Activated CD4-positive, alpha-beta T cell treated with anti-CD3 and anti-CD28 coated beads for 36 hours (primary cell): ENCODE measurements at regions of chr12 and their contacts with region 1.

Region 1: DNA sequence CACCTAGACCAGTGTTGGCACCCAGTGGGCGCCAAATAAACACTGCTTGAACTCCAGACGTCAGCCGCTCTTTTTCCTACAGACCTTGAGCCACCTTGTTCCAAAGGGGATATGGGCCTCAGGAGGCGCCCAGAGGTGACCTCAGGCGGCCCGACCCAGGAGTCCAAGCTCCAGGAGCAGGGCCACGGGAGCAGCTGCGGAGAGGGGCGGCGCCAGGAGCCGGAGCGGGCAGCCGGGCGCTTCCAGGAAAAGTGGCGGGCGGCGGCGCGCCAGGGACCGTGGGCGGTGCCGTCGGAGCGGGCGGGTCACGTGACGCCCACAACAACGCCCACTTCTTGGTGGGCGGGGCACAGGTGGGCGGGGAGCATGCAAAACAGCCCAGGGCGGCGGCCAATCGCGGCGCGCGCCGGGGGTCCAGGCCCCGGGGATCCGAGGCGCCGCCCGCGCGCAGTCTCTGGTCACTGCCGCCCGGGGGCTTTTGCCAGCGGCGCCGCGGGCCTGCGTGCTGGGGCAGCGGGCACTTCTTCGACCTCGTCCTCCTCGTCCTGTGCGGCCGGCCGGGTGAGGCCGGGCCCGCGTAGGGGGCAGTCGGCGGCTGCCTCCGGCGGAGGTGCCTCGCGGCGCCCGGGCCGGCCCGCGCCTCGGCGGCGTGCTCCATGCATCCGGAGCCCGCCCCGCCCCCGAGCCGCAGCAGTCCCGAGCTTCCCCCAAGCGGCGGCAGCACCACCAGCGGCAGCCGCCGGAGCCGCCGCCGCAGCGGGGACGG is at the start of gene ORAI1:
- DNase-seq: peak; percentile 98
- ATAC-seq: peak; percentile 50
- H3K4me3 Mint-ChIP-seq: peak within 1 kb of the TSS; percentile 92
- H3K27ac Mint-ChIP-seq: peak within 1 kb of the TSS; percentile 99
- H3K4me1 Mint-ChIP-seq: peaks cover 36% of the 10 kb centered on the region
- H3K27me3 Mint-ChIP-seq: no peaks in the 10 kb centered on the region
- total RNA-seq, gene ORAI1: 29.4 to 35.9 TPM

Region 2: DNA sequence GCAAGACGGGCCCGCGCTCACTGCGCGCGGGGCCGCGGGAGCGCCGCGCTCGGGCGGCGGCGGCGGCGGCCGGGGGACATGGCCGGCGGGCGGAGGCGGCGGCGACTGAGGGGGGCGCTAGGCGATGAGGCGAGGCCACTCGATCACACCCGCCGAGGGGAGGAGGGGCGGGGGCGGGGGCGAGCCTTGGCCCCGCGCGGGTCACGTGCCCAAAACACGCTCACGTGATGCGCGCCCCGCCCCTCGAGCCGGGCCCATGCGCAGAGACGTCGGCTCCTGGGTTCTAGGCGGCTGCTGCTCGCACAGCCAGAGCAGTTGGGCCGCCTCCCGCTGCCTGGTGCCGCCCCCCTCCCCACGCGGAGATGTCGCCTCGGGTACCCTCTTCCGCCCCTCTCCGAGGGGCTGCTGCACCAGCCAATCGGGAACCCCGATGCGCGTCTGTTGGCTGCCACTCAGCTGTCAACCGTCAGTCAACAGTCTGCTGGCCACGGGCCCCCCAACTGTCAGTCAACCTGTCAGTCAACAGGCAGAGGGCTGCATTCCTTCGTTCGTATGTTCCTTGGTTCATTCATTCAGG is 722.0 kb before region 1 on chr12 and contains the start of gene SPPL3:
- CTCF ChIA-PET with region 1: no interaction called
- POLR2A ChIA-PET with region 1: no interaction called
- intact Hi-C with region 1: loop called in 1 of 2 experiments (anchors 1 kb)
- DNase-seq: peak; percentile 96
- ATAC-seq: peak; percentile 81
- H3K4me3 Mint-ChIP-seq: peak within 1 kb of the TSS; percentile 92
- H3K27ac Mint-ChIP-seq: peak within 1 kb of the TSS; percentile 95
- H3K4me1 Mint-ChIP-seq: peaks cover 28% of the 10 kb centered on the region
- H3K27me3 Mint-ChIP-seq: no peaks in the 10 kb centered on the region
- total RNA-seq, gene SPPL3: 29.5 to 48.2 TPM

Region 3: DNA sequence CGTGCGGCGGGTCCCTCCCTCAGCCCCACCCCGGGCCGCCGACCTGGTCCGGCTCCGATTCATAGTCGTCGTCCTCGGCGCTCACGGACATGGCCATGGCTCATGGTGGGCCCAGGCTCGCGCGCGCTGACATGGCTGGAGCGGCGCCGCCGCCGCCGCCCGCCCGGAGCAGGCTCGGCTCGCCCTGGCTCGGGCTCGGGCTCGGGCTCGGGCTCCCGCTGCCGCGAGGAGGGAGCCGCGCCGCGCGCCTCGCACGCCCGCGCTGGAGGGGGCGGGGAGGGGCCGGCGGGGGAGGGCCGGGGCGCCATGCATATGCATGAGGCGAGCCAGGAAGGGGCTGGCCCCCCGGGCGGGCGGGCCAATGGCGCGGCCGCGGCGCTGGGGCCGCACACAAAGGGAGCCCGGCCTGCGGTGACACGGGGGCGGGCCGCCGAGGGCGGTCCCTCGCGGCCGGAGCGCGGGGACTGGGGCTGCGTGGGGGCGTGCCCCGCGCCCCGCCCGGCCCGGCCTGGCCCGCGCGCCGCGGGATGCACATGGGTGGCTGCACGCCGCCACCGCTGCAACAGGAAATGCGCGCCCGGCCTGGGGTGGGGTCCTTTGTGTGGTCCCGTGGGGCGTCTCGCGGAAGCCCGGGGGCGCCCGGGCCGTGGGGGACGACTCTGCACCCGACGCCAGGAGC is 159.0 kb before region 1 on chr12:
- CTCF ChIA-PET with region 1: no interaction called
- POLR2A ChIA-PET with region 1: no interaction called
- intact Hi-C with region 1: loop called in 1 of 2 experiments (anchors 1 kb)
- DNase-seq: peak; percentile 93
- ATAC-seq: peak; percentile 94
- H3K4me3 Mint-ChIP-seq: peak overlapping the region; percentile 57
- H3K27ac Mint-ChIP-seq: no peak overlapping the region
- H3K4me1 Mint-ChIP-seq: peaks cover 20% of the 10 kb centered on the region
- H3K27me3 Mint-ChIP-seq: no peaks in the 10 kb centered on the region

Region 4: DNA sequence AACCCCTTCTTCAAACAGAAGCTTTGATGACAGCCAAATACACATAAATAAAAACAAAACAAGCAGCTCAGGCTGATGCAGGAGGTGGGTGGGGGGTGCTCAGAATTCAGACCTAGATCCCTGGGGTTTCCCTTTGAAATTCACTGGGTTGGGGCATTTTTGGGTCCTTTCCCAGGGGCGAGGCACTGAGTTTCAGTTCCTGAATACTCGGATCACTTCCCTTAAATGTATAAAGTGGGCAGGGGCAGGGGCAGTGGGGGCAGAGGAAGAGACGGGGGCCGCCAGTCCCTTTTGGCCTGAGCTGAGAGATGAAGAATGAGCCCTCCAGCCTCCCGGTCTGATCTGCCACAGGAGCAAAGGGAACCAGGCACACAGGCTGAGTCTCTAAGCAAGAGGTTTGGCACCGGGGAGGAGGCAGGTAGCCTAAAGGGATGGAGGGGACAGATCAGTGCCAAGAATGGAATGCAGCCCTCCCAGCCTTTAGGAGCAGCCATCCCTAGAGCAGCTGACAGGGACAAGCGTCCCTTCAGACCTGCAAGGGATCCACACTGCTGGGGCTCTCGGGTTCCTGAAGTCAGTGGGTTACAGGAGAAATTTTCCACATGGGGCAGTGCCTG is 65.8 kb before region 1 on chr12:
- CTCF ChIA-PET with region 1: interaction called, 7 read pairs
- POLR2A ChIA-PET with region 1: no interaction called
- intact Hi-C with region 1: loop called in 1 of 2 experiments (anchors 1 kb)
- DNase-seq: no peak
- ATAC-seq: no peak
- H3K4me3 Mint-ChIP-seq: no peak overlapping the region
- H3K27ac Mint-ChIP-seq: peak overlapping the region; percentile 31
- H3K4me1 Mint-ChIP-seq: peaks cover 8% of the 10 kb centered on the region
- H3K27me3 Mint-ChIP-seq: no peaks in the 10 kb centered on the region

Region 5: DNA sequence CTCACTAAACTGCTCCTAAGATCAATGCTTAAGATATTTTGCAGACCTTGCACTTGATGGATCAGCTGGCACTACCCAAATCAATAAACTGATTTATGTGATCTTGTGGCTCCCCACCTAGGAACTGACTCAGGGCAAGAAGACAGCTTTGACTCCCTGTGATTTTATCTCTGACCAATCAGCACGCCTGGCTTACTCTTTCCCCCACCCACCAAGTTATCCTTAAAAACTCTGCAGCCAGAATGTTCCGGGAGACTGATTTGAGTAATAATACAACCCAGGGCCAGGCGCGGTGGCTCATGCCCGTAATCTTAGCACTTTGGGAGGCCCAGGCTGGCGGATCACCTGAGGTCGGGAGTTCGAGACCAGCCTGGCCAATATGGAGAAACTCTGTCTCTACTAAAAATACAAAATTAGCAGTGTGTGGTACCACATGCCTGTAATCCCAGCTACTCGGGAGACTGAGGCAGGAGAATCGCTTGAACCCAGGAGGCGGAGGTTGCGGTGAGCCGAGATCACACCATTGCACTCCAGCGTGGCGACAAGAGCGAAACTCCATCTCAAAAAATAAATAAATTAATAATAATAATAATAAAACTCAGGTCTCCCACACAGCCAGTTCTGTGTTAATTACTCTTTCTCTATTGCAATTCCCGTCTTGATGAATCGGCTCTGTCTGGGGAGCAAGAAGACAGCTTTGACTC is 31.2 kb after region 1 on chr12:
- CTCF ChIA-PET with region 1: interaction called, 7 read pairs
- POLR2A ChIA-PET with region 1: interaction called, 10 read pairs
- intact Hi-C with region 1: loop called (anchors 1 kb)
- DNase-seq: peak; percentile 65
- ATAC-seq: peak; percentile 64
- H3K4me3 Mint-ChIP-seq: peak overlapping the region; percentile 1
- H3K27ac Mint-ChIP-seq: peak overlapping the region; percentile 99
- H3K4me1 Mint-ChIP-seq: peaks cover 65% of the 10 kb centered on the region
- H3K27me3 Mint-ChIP-seq: no peaks in the 10 kb centered on the region

Region 6: GRCh38 chr12:121712461-121713256 is 86.4 kb after region 1 on chr12 and contains the start of gene TMEM120B:
- CTCF ChIA-PET with region 1: no interaction called
- POLR2A ChIA-PET with region 1: interaction called, 4 read pairs
- intact Hi-C with region 1: loop called in 1 of 2 experiments (anchors 1 kb)
- DNase-seq: peak; percentile 90
- ATAC-seq: peak; percentile 87
- H3K4me3 Mint-ChIP-seq: peak within 1 kb of the TSS; percentile 95
- H3K27ac Mint-ChIP-seq: peak within 1 kb of the TSS; percentile 91
- H3K4me1 Mint-ChIP-seq: peaks cover 16% of the 10 kb centered on the region
- H3K27me3 Mint-ChIP-seq: no peaks in the 10 kb centered on the region
- total RNA-seq, gene TMEM120B: 8.8 to 11.7 TPM

Region 7: DNA sequence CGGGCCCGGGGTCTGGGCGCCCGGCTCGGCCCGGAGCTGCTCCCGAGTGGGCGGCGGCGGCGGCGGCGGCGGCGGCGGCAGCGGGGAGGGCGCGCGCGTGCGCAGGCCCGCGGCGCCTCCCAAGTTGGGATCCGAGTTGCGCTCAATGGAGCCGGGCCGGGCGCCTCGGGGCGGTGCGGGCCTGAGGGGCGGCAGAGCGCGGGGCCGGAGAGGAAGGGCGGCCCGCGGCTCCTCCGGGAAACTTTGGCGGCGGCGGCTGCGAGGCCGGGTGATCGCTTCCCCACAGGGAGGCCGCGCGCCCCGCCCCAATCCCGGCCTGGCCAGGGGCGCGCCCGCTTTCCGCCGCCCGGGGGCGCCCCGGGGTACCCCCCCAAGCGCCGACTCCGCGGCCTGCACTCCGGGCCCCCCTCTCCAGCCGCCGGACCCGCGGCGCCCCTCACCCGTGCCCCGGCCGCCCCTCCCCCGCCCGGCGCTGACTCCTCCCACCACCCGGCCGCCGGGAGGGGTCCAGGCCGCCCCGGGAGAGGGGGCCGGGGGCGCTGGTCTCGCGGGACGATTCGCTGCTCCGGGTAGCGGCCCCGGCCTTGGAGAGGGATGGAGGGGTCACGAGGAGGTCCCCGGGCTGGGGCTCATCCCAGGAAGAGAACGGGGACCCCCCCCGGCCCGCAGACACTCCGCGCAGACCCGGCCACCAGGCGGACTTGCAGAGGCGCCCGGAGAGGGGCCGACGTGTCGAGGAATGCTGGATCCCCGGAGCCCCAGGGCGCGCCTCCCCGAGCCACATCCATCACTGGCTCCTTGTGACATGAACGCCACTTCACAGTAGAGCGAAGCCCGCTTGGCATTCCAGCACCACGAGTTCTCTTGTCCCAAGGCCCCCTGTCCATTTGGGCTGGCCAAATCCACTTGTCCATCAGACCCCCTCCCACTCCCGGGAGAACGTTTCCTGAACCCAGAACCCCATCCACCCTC is 1907.7 kb after region 1 on chr12 and contains the start of gene RILPL1:
- CTCF ChIA-PET with region 1: no interaction called
- POLR2A ChIA-PET with region 1: no interaction called
- intact Hi-C with region 1: loop called in 1 of 2 experiments (anchors 5 kb)
- DNase-seq: peak; percentile 63
- ATAC-seq: peak; percentile 64
- H3K4me3 Mint-ChIP-seq: peak within 1 kb of the TSS; percentile 78
- H3K27ac Mint-ChIP-seq: peak within 1 kb of the TSS; percentile 74
- H3K4me1 Mint-ChIP-seq: peaks cover 23% of the 10 kb centered on the region
- H3K27me3 Mint-ChIP-seq: peaks cover 3% of the 10 kb centered on the region
- total RNA-seq, gene RILPL1: 4.7 to 5.3 TPM